ENCODE measurements at regions of chr11 and their contacts with region 1.

Region 1: DNA sequence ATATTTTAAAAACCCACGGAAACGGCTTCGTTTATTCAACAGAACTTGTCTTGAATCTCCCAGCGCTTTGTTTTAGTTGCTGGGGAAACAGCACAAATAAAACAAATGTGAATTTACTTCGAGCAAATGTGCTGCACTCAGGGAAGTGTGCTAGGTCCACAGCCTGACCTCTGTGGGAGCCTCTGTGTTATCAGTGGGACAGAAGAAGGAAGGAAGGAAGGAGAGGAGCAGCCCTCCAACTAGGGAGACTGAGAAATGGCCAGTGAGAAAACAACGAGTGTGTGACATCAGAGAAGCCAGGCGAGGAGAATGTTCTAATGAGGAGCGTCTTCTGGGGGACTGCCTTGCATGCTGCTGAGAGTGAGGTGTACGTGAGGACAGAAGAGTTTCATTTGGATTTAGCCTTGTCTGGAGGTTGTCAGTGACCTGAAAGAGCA is 42.7 kb downstream of the PPP6R3 start:
- DNase-seq: no peak
- ATAC-seq: peak in 3 of 4 donors; percentile 11 to 23 (median 23)
- H3K4me3 ChIP-seq: no peak overlapping the region
- H3K27ac ChIP-seq: peak overlapping the region; percentile 60
- H3K4me1 ChIP-seq: peaks cover 98% of the 10 kb centered on the region
- H3K27me3 ChIP-seq: no peaks in the 10 kb centered on the region
- CTCF ChIP-seq: no peak

Region 2: DNA sequence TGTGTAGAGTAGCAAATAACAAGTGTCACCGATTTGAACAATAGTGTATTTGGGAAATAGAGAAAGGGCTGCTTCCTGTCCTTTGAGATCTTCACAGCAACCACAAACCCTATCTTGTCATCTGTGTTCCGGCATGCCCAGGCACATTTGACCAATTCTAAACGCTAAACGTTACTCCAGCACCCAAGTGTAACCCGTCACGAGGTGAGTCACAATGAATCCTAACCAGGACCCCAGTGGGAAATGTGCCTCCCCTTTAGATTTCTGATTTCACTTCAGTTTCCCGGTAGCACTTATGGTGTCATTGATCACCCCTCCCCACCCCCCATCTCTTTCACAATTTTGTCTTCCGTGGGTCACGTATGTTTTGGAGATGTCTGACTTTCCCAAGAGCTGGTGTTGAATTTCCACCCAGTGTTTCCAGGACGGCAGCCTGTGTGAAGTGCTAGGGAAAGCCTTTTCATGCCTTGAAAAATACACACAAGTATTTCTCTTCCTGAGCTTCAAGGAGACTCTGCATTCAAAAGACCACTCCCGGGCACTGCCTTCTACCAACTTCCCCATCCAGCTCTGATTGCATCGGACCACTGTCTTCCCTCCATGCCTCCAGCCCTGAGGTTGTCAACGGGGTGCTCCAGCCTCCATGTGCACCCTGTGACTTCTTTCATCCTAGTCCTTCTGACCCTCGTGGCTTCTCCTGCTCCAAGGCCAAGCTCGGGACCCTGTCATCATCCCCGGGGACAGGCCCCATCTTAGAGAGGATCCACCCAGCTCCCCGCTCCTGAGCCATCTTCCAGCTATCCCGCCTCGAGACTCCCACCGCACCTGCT is 220.9 kb before region 1 on chr11:
- intact Hi-C with region 1: no loop called
- DNase-seq: no peak
- ATAC-seq: peak in 1 of 4 donors; percentile 13
- H3K4me3 ChIP-seq: no peak overlapping the region
- H3K27ac ChIP-seq: no peak overlapping the region
- H3K4me1 ChIP-seq: no peaks in the 10 kb centered on the region
- H3K27me3 ChIP-seq: no peaks in the 10 kb centered on the region
- CTCF ChIP-seq: no peak

Region 3: DNA sequence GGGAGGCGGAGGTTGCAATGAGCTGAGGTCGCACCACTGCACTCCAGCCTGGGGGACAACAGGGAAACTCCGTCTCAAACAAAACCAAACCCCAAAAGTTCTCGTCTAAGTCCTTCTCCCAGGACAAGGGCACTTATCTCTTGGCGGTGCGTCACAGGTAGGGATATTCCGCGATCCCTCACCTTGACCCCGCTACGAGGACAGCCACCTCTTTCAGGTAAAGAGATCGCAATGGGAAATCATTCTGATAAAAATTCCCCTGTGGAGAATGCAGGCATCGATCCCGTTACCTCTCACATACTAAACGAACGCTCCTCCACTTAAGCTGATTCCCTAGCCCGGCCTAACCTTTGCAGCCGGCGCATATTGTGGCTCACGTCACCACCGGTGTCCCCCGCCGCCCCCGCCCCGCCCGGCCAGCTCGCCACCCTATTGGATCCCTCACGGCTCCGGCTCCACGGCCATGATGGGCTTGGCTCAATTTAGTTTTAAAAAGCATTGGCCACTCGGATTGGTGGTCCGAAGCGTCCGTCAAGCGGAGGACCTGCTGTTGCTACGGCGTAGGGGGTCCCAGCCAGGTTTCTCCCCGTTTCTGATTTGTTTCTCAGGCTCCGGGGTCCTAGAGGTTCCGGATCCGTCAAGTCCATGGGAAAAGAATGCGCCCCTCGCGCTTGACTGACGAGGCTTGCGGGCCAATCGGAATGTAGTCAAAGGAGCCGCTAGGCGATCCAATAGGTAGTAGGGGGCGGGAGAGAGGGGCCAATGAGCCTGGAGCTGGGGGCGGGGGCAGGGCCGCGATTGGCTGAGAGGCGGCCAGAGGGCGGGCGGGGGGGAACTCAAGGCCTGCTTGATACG is 43.2 kb before region 1 on chr11:
- intact Hi-C with region 1: loop called (anchors 5 kb)
- DNase-seq: peak; percentile 96 to 97
- ATAC-seq: peak; percentile 90 to 92 (median 92)
- H3K4me3 ChIP-seq: peak overlapping the region; percentile 94
- H3K27ac ChIP-seq: peak overlapping the region; percentile 99
- H3K4me1 ChIP-seq: peaks cover 32% of the 10 kb centered on the region
- H3K27me3 ChIP-seq: no peaks in the 10 kb centered on the region
- CTCF ChIP-seq: no peak

Region 4: GRCh38 chr11:68535098-68535497 is 31.8 kb after region 1 on chr11:
- intact Hi-C with region 1: loop called (anchors 5 kb)
- DNase-seq: no peak
- ATAC-seq: peak in 3 of 4 donors; percentile 22 to 26 (median 24)
- H3K4me3 ChIP-seq: no peak overlapping the region
- H3K27ac ChIP-seq: peak overlapping the region; percentile 84
- H3K4me1 ChIP-seq: peaks cover 71% of the 10 kb centered on the region
- H3K27me3 ChIP-seq: no peaks in the 10 kb centered on the region
- CTCF ChIP-seq: no peak